GM12878 (cell line): ENCODE measurements at regions of chr12 and their contacts with region 1.

Region 1: GRCh38 chr12:111753144-111753881 is 13.4 kb upstream of the ALDH2 start:
- DNase-seq: no peak
- ATAC-seq: peak; percentile 77
- H3K4me3 ChIP-seq: no peak overlapping the region
- H3K27ac ChIP-seq: no peak overlapping the region
- H3K4me1 ChIP-seq: peaks cover 11% of the 10 kb centered on the region
- H3K27me3 ChIP-seq: no peaks in the 10 kb centered on the region
- CTCF ChIP-seq: peak; percentile 77 to 92 (median 81)
- EP300 ChIP-seq: no peak
- POLR2A ChIP-seq: 0 out of 2 replicates have a peak, but pooled peaks have one; percentile 16
- RAD21 ChIP-seq: peak; percentile 76

Region 2: GRCh38 chr12:111766608-111767361 is 13.5 kb after region 1 on chr12 and contains the start of gene ALDH2:
- CTCF ChIA-PET with region 1: interaction called, 20 read pairs
- POLR2A ChIA-PET with region 1: no interaction called
- RAD21 ChIA-PET with region 1: interaction called, 8 read pairs
- SMC1A ChIA-PET with region 1: interaction called, 5 read pairs
- in situ Hi-C with region 1: no loop called
- intact Hi-C with region 1: no loop called
- DNase-seq: no peak
- ATAC-seq: peak; percentile 61
- H3K4me3 ChIP-seq: peak within 1 kb of the TSS; percentile 59; the same call in 1 of the 2 replicates
- H3K27ac ChIP-seq: peak within 1 kb of the TSS; percentile 65
- H3K4me1 ChIP-seq: peaks cover 46% of the 10 kb centered on the region
- H3K27me3 ChIP-seq: no peaks in the 10 kb centered on the region
- CTCF ChIP-seq: no peak; a peak in 1 of 6 replicates
- EP300 ChIP-seq: no peak
- POLR2A ChIP-seq: peak; percentile 66
- RAD21 ChIP-seq: no peak
- polyA plus RNA-seq, gene ALDH2: 1.8 to 4.9 TPM

Region 3: DNA sequence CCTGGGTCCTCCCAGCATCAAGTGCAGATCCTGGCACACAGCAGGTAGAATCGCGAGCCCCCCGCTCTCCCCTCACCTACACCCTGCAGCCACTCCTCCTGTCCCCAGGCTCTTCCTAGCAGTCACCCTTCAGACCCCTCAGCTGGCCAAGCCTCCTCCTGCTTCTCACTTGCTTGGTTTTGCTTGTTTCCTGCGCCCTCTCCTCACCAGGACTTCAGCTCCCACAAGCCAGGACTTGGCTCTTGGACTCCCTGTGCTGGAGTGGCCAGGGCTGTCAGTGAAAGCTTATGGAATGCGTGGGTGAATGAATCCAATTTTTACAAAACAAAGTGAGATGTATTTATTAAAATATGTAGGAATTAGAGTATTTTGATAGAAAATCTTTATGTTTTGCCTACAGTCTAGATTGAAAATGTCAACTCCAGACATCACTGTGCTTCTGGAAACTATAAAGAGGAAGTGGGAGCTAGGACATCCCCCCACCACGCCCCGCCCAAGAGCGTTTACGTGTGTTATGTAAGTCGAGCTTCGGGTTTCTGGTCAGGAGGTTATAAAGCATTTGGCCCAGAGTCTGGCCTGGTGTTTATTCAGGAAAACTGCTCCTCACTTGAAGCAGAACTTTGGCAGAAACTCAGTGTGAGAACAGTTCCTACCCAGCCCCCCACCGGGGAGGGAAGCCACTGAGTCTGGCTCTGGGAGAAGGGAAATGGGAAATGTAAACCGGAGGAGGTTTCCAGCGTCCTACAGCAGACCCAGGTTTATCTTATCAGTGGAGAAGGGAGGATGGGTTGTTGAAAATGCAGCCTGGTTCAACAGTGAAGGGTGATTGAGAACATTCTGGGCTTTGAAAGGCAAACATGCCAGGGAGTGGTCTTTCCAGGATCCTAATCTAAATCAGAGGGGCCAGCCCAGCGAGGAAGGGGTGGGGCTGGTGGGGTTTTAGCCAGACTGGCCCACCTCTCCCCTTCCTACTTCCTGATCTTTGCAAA is 22.2 kb after region 1 on chr12:
- CTCF ChIA-PET with region 1: interaction called, 4 read pairs
- POLR2A ChIA-PET with region 1: interaction called, 3 read pairs
- RAD21 ChIA-PET with region 1: interaction called, 16 read pairs
- SMC1A ChIA-PET with region 1: interaction called, 13 read pairs
- in situ Hi-C with region 1: no loop called
- intact Hi-C with region 1: no loop called
- DNase-seq: peak; percentile 70
- ATAC-seq: peak; percentile 91
- H3K4me3 ChIP-seq: peak overlapping the region; percentile 57; the same call in 1 of the 2 replicates
- H3K27ac ChIP-seq: peak overlapping the region; percentile 86
- H3K4me1 ChIP-seq: peaks cover 34% of the 10 kb centered on the region
- H3K27me3 ChIP-seq: no peaks in the 10 kb centered on the region
- CTCF ChIP-seq: no peak
- EP300 ChIP-seq: peak; percentile 53 to 83
- POLR2A ChIP-seq: peak; percentile 62
- RAD21 ChIP-seq: no peak

Region 4: GRCh38 chr12:111788178-111788654 is 34.9 kb after region 1 on chr12:
- CTCF ChIA-PET with region 1: interaction called, 44 read pairs
- POLR2A ChIA-PET with region 1: interaction called, 4 read pairs
- RAD21 ChIA-PET with region 1: interaction called, 7 read pairs
- SMC1A ChIA-PET with region 1: interaction called, 44 read pairs
- in situ Hi-C with region 1: no loop called
- intact Hi-C with region 1: loop called (anchors 1 kb)
- DNase-seq: no peak
- ATAC-seq: peak; percentile 98
- H3K4me3 ChIP-seq: no peak overlapping the region
- H3K27ac ChIP-seq: no peak overlapping the region
- H3K4me1 ChIP-seq: no peaks in the 10 kb centered on the region
- H3K27me3 ChIP-seq: no peaks in the 10 kb centered on the region
- CTCF ChIP-seq: peak; percentile 57 to 83 (median 69)
- EP300 ChIP-seq: no peak
- POLR2A ChIP-seq: no peak
- RAD21 ChIP-seq: peak; percentile 79

Region 5: GRCh38 chr12:111826316-111826715 is 73.0 kb after region 1 on chr12:
- CTCF ChIA-PET with region 1: interaction called, 10 read pairs
- POLR2A ChIA-PET with region 1: no interaction called
- RAD21 ChIA-PET with region 1: no interaction called
- SMC1A ChIA-PET with region 1: no interaction called
- in situ Hi-C with region 1: no loop called
- intact Hi-C with region 1: no loop called
- DNase-seq: no peak
- ATAC-seq: no peak
- H3K4me3 ChIP-seq: no peak overlapping the region
- H3K27ac ChIP-seq: no peak overlapping the region
- H3K4me1 ChIP-seq: no peaks in the 10 kb centered on the region
- H3K27me3 ChIP-seq: no peaks in the 10 kb centered on the region
- CTCF ChIP-seq: no peak
- EP300 ChIP-seq: no peak
- POLR2A ChIP-seq: no peak
- RAD21 ChIP-seq: no peak